ENCODE measurements at regions of chr20 and their contacts with region 1.

Region 1: DNA sequence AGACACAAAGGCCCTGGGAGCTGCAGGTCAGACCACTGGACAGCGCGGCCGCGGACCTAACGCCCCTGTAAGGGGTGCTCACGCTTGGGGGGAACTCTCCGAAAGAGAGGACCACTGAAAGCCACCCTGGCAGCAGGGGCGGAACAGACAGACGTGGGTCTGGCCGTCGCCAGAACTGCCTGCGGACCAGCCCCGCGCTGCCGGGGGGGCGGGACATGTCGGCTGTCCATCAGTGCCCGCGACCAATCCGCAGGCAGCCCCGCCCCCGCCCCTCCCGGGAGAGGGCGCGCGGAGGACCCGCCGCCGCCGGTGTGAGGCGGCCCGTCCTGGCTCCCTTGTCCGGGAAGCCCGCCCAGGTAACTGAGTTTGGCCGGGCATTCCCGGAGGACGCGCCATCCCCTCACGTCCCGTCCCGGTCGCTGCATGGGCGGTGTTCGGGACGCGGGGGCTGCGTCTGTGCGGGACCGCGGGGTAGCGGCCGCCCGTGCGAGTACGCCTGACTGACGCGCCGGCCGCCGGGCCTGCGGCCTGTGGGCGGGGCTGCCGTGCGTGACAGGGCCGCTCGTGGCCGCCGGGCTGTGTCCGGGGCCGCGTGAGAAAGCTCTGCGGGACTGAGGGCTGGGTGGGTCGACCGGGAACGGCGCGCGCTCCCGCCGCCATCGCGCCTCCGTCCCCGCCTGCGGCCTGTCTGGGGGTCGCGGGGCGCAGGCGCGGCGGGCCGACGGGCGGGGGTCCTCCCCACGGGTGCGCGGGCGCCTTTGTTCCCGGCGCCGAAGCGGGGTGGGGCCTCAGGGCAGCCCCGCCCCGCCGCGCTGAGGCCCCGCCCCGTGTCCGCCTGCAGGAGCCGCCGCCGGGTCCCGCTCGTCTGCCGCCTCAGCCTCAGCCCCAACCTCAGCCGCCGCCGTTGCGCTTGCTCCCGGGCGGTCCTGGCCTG is at the start of gene PLCG1:
- DNase-seq: peak; percentile 83
- H3K4me3 Mint-ChIP-seq: peak within 1 kb of the TSS; percentile 95
- H3K27ac Mint-ChIP-seq: peak within 1 kb of the TSS; percentile 91
- H3K4me1 Mint-ChIP-seq: peaks cover 71% of the 10 kb centered on the region
- H3K27me3 Mint-ChIP-seq: no peaks in the 10 kb centered on the region
- total RNA-seq, gene PLCG1: 203 and 205 TPM in 2 replicates

Region 2: DNA sequence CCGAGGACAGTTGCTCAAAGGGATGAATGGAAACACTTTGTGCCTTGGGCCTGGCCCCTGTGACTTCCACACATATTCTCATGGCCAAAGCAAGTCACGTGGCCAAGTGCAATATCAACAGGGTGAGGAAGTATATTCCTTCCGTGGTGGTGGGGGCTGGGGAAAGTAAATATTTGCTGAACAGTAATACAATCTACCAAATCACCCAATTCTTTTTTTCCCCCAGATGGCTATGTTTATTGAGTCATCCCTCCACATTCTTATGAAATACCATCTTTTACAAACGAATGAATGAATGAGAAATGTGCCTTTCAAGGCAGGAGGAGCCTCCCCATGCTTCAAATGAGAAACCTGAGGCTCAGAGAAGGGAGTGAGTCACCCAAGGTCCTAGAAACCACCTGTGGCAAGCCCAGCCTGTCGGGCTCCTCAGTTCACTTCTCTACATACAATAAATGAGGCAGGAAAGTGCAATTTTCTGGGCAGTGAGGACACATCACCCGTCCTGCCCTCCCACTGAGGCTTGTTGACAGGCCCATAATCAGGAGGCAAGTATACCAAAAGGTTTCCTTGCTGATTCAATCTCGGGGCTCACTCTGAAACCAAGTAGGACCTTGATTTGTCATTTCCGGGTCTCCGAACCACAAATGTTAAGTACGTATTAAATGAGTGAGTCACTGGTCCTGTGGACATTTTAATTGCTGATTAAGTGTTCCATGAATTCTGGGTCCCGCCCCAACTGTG is 133.6 kb before region 1 on chr20:
- intact Hi-C with region 1: loop called (anchors 1 kb)
- DNase-seq: peak; percentile 56
- H3K4me3 Mint-ChIP-seq: peak overlapping the region; percentile 66
- H3K27ac Mint-ChIP-seq: peak overlapping the region; percentile 94
- H3K4me1 Mint-ChIP-seq: peaks cover 42% of the 10 kb centered on the region
- H3K27me3 Mint-ChIP-seq: no peaks in the 10 kb centered on the region

Region 3: DNA sequence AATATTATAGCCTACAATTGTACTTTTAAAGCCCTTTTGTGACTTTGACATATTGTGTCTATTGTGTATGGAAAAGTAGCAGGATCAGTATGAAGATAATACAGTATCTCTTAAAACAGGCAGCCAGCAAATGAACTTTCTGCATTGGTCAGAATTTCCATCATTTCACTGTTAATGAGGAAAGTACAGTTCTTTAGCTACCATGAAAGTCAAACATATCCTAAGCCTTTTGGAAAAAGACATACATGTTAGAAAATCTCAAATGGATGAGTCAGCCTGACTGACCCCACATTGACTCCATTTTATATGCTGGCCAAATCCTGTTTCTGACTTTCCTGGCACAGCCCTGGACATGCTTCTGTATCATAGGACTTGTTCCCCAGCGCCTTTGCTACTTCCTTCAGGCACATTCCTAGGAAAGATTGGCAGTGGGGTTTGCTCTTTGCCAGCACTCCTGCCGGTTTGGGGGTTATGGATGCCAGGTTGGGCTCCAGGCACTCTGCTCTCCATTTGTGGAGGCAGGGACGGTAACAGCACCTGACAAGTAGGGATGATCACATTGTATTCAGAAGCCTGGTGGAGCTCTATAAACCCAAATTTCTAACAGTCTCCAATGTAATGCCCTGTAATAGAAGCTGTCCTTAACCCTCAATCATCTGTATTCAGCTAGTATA is 64.6 kb before region 1 on chr20:
- intact Hi-C with region 1: no loop called
- DNase-seq: no peak
- H3K4me3 Mint-ChIP-seq: peak overlapping the region; percentile 35
- H3K27ac Mint-ChIP-seq: peak overlapping the region; percentile 74
- H3K4me1 Mint-ChIP-seq: peaks cover 78% of the 10 kb centered on the region
- H3K27me3 Mint-ChIP-seq: no peaks in the 10 kb centered on the region

Region 4: GRCh38 chr20:41161886-41162285 is 24.9 kb after region 1 on chr20:
- intact Hi-C with region 1: loop called (anchors 1 kb)
- DNase-seq: no peak
- H3K4me3 Mint-ChIP-seq: peak overlapping the region; percentile 24
- H3K27ac Mint-ChIP-seq: peak overlapping the region; percentile 80
- H3K4me1 Mint-ChIP-seq: peaks cover 59% of the 10 kb centered on the region
- H3K27me3 Mint-ChIP-seq: no peaks in the 10 kb centered on the region

Region 5: DNA sequence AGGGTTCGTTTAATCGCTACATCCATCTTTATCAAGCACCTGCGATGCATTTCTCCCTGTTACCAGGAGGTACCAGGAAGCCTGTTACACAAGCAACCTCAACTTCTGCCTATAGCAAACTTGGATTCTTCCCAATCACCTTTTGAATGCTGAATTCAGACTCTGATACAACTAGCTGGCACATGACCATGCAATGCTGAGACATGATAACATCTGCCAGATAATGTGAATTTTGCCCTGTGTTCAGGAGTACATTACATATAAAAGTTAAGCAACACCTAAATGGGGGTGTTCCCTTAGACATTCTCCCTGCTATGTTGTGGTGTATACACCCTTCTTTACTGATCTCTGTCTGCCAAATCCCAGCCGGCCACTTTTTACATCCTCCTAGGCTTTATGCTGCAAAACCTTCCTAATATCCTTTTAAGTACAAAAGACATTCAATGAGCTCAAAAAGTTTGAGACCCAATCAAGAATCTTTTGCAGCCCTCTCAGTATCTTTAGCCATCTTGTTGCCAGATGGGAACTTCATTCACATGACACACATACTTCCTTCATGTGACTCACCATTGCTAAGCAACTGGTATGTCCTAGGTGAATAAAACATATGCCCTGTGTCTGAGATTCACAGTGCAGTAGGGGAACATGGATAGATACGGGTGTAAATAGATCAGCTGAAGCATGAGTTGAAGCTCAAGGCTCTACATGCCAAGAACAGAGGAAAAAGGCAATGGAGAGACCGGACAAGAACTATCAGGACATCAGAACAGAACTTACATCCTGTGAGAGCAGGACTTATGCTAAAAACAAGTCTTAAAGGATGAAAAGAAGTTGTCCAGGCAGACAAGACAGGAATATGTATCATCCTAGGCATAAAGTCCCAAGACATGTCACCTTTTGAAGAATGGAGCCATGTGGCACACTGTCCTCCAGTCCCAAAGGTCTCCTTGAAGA is 96.3 kb after region 1 on chr20:
- intact Hi-C with region 1: loop called (anchors 1 kb)
- DNase-seq: no peak
- H3K4me3 Mint-ChIP-seq: no peak overlapping the region
- H3K27ac Mint-ChIP-seq: no peak overlapping the region
- H3K4me1 Mint-ChIP-seq: peaks cover 30% of the 10 kb centered on the region
- H3K27me3 Mint-ChIP-seq: no peaks in the 10 kb centered on the region

Region 6: DNA sequence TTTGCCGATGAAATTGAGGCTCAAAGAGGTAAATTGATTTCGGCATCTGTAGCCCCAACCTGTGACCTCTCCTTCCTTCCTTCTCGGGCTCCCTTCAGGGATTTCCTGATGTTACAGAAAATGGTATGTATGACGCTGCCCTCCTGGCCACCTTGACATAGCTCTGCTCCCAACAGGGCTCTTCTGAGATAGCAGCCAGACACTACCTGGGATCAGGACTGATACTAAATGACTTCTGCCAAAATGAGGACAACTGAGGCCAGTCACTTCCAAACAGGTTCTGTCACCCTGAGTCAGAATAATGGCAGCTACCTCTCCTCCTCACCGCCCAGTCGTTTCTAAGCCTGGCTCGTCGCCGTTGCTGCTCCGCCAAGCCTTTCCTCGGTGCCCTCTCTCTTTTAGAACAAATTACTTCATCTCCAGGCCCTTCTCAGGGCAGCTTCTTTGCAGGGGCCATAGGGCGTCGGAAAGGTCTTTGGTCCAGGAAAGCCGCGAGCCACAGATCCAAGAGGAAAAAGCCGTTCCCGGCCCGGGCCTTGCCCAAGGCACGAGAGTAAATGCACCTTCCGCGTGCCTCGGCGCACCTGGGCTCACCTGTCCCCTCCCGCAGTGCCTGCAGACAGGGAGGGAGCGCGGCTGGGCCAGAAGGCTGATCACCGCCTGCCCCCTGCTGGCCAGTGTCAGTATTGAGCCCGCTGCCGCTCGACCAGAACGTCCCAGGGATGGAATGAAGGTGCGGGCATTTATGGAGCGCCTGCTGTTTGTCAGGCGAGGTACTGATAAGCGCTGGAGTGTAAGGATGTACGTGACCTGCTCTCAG is 202.8 kb after region 1 on chr20:
- intact Hi-C with region 1: loop called (anchors 1 kb)
- DNase-seq: peak; percentile 78
- H3K4me3 Mint-ChIP-seq: peak overlapping the region; percentile 86
- H3K27ac Mint-ChIP-seq: no peak overlapping the region
- H3K4me1 Mint-ChIP-seq: peaks cover 13% of the 10 kb centered on the region
- H3K27me3 Mint-ChIP-seq: peaks cover 14% of the 10 kb centered on the region

Region 7: GRCh38 chr20:41617931-41618806 is 481.2 kb after region 1 on chr20 and contains the start of gene CHD6:
- intact Hi-C with region 1: loop called (anchors 2 kb)
- DNase-seq: peak; percentile 99
- H3K4me3 Mint-ChIP-seq: peak within 1 kb of the TSS; percentile 94
- H3K27ac Mint-ChIP-seq: peak within 1 kb of the TSS; percentile 89
- H3K4me1 Mint-ChIP-seq: peaks cover 40% of the 10 kb centered on the region
- H3K27me3 Mint-ChIP-seq: peaks cover 16% of the 10 kb centered on the region
- total RNA-seq, gene CHD6: 34.3 and 36.8 TPM in 2 replicates

Measured in activated T-helper 1 cell treated with anti-CD3 and anti-CD28 coated beads, Interleukin-12 subunit alpha, Interleukin-12 subunit beta, Interleukin-2, Interleukin-4 antibody, amounts not matched to agents 30 ng/mL and 10 ng/mL and 1 ng/mL, durations not matched to agents 14 hours and 24 hours and 36 hours (primary cell).